Ascending aorta (tissue), 2 donors: ENCODE measurements at regions of chr1 and their contacts with region 1.

Region 1: DNA sequence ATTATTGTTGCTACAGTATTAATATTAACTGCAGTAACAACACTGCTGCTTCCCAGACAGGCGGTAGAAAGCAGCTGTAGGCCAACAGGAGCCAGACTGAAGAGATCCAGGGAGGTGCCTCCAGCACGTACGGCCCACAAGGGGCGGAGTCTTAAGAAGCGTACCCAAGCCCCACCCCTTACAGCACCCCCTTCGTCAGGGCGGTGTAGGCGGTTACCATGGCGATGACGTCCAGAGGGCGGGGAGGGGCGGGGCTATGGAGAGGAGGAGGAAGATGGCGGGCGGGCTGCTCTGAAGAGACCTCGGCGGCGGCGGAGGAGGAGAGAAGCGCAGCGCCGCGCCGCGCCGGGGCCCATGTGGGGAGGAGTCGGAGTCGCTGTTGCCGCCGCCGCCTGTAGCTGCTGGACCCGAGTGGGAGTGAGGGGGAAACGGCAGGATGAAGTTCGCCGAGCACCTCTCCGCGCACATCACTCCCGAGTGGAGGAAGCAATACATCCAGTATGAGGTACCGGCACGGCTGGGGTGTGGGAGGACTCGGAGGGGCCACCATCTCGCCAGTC is at the start of gene XPR1:
- DNase-seq: peak; percentile 92 to 99
- H3K4me3 ChIP-seq: peak within 1 kb of the TSS; percentile 83 to 85
- H3K27ac ChIP-seq: peak within 1 kb of the TSS; percentile 87 to 90
- H3K4me1 ChIP-seq: peaks cover 0 to 5% of the 10 kb centered on the region in 2 donors
- H3K27me3 ChIP-seq: no peaks in the 10 kb centered on the region
- CTCF ChIP-seq: peak in 2 of 3 experiments; percentile 17 to 35
- total RNA-seq, gene XPR1: 41.6 TPM

Region 2: GRCh38 chr1:180533266-180533987 is 98.4 kb before region 1 on chr1:
- intact Hi-C with region 1: loop called (anchors 2 kb)
- DNase-seq: peak in 1 of 2 donors; percentile 79
- H3K4me3 ChIP-seq: no peak overlapping the region
- H3K27ac ChIP-seq: no peak overlapping the region
- H3K4me1 ChIP-seq: peaks cover 8 to 14% of the 10 kb centered on the region in 2 donors
- H3K27me3 ChIP-seq: no peaks in the 10 kb centered on the region
- CTCF ChIP-seq: peak; percentile 70 to 83 (median 77)

Region 3: GRCh38 chr1:180563026-180563827 is 68.6 kb before region 1 on chr1:
- intact Hi-C with region 1: loop called (anchors 5 kb)
- DNase-seq: no peak
- H3K4me3 ChIP-seq: no peak overlapping the region
- H3K27ac ChIP-seq: peak overlapping the region; percentile 47 to 76
- H3K4me1 ChIP-seq: peaks cover 8 to 25% of the 10 kb centered on the region in 2 donors
- H3K27me3 ChIP-seq: no peaks in the 10 kb centered on the region
- CTCF ChIP-seq: no peak

Region 4: GRCh38 chr1:180586671-180587155 is 45.1 kb before region 1 on chr1:
- intact Hi-C with region 1: loop called (anchors 1 kb)
- DNase-seq: no peak
- H3K4me3 ChIP-seq: no peak overlapping the region
- H3K27ac ChIP-seq: peak overlapping the region in 1 of 2 donors; percentile 53
- H3K4me1 ChIP-seq: peaks cover 6 to 9% of the 10 kb centered on the region in 2 donors
- H3K27me3 ChIP-seq: no peaks in the 10 kb centered on the region
- CTCF ChIP-seq: no peak

Region 5: DNA sequence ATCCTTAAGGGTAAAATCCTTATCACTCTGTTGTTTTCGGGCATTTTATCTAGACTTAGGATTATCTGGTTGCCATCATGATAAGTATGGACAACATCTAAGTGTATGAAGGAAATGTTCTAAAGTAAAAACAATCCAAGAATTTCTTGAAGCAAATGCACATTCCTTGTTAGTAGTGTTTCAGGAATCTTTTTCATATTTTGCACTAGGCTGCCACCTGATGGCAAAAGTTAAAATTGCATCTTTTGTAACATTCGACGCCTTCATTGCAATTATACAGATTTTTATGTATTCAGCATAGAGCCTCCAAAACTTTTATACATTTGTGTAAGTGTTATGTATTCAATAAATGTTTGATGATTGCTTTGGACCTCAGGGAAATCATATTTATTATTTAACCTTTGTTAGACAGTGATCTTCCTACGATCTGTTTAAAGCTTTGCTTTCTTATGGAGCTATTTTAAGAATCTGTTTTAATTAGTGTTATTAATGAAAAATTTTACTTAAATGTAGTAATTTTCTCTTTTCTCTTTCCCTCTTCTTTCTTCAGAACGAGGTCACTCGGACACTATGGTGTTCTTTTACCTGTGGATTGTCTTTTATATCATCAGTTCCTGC is 231.4 kb after region 1 on chr1:
- intact Hi-C with region 1: loop called (anchors 5 kb)
- DNase-seq: peak in 1 of 2 donors; percentile 66
- H3K4me3 ChIP-seq: no peak overlapping the region
- H3K27ac ChIP-seq: no peak overlapping the region
- H3K4me1 ChIP-seq: peaks cover 0 to 3% of the 10 kb centered on the region in 2 donors
- H3K27me3 ChIP-seq: no peaks in the 10 kb centered on the region
- CTCF ChIP-seq: peak; percentile 56 to 78 (median 63)

Region 6: GRCh38 chr1:181152892-181153633 is 521.2 kb after region 1 on chr1:
- intact Hi-C with region 1: loop called (anchors 5 kb)
- DNase-seq: peak; percentile 72 to 95
- H3K4me3 ChIP-seq: peak overlapping the region in 1 of 2 donors; percentile 5
- H3K27ac ChIP-seq: peak overlapping the region; percentile 81 to 92
- H3K4me1 ChIP-seq: peaks cover 8 to 20% of the 10 kb centered on the region in 2 donors
- H3K27me3 ChIP-seq: no peaks in the 10 kb centered on the region
- CTCF ChIP-seq: peak in 2 of 3 experiments; percentile 31 to 45